Activated T-helper 1 cell treated with anti-CD3 and anti-CD28 coated beads, Interleukin-12 subunit alpha, Interleukin-12 subunit beta, Interleukin-2, Interleukin-4 antibody, amounts not matched to agents 30 ng/mL and 10 ng/mL and 1 ng/mL, durations not matched to agents 14 hours and 24 hours and 36 hours (primary cell): ENCODE measurements at regions of chr2 and their contacts with region 1.

Region 1: DNA sequence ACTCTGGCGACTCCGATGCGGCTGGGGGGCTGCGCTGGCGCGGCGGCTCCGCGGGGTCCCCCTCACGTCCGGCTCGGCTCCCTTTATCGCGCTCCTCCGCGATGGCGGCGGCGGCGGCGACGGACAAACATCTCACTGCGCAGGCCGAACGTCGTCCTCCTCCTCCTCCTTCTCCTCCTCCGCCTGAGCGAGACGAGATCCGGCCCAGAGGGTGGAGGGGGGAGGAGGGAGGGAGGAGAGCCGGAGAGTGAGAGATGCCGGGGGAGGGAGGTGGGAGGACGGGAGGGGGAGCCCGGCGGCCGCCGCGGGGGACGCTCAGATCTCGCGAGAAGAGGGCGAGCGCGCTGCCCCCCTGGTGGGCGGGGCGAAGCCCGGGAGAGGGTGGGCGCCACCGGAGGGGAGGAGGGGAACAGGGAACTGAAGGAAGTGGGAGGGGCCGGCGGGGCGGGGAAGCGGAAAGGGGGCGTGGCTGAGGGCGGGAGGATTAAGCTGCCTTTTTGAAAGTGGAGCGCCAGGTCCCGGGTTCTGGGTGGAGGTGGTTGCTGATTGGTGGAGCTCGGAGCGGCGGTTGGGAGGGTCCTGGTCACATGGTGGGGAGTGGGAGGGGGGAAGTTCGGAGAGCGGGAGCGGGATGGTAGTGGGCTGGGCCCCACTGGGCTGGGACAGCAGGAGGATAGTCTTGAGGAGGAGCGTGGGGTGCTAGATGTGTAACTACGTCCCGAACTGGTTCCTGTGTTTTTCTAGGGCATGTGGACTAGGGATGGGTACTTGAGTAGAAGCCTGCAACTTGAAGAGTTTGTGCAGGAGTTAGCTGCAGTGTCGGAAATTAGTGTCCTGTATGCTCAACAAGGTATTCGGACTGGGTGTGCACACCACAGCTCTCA is at the start of gene CUL3:
- DNase-seq: peak; percentile 99
- H3K4me3 Mint-ChIP-seq: peak within 1 kb of the TSS; percentile 97
- H3K27ac Mint-ChIP-seq: peak within 1 kb of the TSS; percentile 96
- H3K4me1 Mint-ChIP-seq: peaks cover 44% of the 10 kb centered on the region
- H3K27me3 Mint-ChIP-seq: no peaks in the 10 kb centered on the region
- total RNA-seq, gene CUL3: 97.1 and 103 TPM in 2 replicates

Region 2: GRCh38 chr2:223957092-223957851 is 628.2 kb before region 1 on chr2 and contains the start of gene MRPL44:
- intact Hi-C with region 1: loop called (anchors 1 kb)
- DNase-seq: peak; percentile 96
- H3K4me3 Mint-ChIP-seq: peak within 1 kb of the TSS; percentile 96
- H3K27ac Mint-ChIP-seq: peak within 1 kb of the TSS; percentile 91
- H3K4me1 Mint-ChIP-seq: peaks cover 79% of the 10 kb centered on the region
- H3K27me3 Mint-ChIP-seq: no peaks in the 10 kb centered on the region
- total RNA-seq, gene MRPL44: 32.7 and 35.0 TPM in 2 replicates

Region 3: GRCh38 chr2:224520064-224520463 is 65.4 kb before region 1 on chr2:
- intact Hi-C with region 1: loop called (anchors 1 kb)
- DNase-seq: peak; percentile 16
- H3K4me3 Mint-ChIP-seq: no peak overlapping the region
- H3K27ac Mint-ChIP-seq: peak overlapping the region; percentile 68
- H3K4me1 Mint-ChIP-seq: peaks cover 48% of the 10 kb centered on the region
- H3K27me3 Mint-ChIP-seq: no peaks in the 10 kb centered on the region

Region 4: DNA sequence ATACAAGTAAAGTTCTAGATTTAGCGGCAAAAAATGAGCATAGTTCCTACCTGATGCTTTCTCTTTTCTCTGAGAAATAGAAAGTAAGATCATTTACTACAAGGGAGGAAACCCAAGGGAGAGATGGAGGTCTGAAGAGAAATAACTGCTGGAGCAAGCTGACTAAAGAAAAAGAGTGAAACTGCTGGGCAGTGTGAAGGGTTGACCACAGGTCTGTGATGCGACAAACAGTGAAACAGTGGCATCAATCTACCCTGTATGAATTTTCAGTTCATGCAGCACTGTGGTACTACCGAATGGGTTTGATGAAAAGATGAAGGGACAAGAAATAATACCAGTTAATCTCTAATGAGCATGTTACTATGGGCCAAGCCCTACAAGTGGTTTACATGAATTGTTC is 52.5 kb before region 1 on chr2:
- intact Hi-C with region 1: no loop called
- DNase-seq: no peak
- H3K4me3 Mint-ChIP-seq: no peak overlapping the region
- H3K27ac Mint-ChIP-seq: no peak overlapping the region
- H3K4me1 Mint-ChIP-seq: peaks cover 34% of the 10 kb centered on the region
- H3K27me3 Mint-ChIP-seq: no peaks in the 10 kb centered on the region

Region 5: DNA sequence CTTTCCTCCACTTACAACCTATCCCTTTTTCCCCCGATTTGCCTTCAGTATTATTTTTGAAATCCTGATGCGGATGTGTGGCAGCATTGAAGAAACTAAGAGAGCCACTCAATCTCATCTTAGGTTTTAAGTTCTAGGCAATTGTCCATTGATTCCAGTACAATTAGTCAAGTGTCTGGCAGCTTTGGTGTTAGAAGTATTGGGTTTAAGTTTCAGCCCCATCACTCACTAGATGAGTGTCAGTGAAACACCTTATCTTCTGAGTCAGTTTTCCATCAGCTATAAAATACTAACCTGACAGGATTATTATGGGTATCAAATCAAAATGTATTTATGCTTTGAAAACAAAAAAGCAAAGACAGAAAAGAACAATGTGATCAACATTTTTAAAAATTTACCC is 16.5 kb after region 1 on chr2:
- intact Hi-C with region 1: loop called (anchors 1 kb)
- DNase-seq: no peak
- H3K4me3 Mint-ChIP-seq: no peak overlapping the region
- H3K27ac Mint-ChIP-seq: no peak overlapping the region
- H3K4me1 Mint-ChIP-seq: peaks cover 9% of the 10 kb centered on the region
- H3K27me3 Mint-ChIP-seq: peaks cover 9% of the 10 kb centered on the region

Region 6: GRCh38 chr2:224778474-224778877 is 193.0 kb after region 1 on chr2:
- intact Hi-C with region 1: loop called (anchors 1 kb)
- DNase-seq: peak; percentile 35
- H3K4me3 Mint-ChIP-seq: no peak overlapping the region
- H3K27ac Mint-ChIP-seq: no peak overlapping the region
- H3K4me1 Mint-ChIP-seq: peaks cover 7% of the 10 kb centered on the region
- H3K27me3 Mint-ChIP-seq: no peaks in the 10 kb centered on the region